Endothelial cell of umbilical vein (primary cell): ENCODE measurements at regions of chr19 and their contacts with region 1.

Region 1: DNA sequence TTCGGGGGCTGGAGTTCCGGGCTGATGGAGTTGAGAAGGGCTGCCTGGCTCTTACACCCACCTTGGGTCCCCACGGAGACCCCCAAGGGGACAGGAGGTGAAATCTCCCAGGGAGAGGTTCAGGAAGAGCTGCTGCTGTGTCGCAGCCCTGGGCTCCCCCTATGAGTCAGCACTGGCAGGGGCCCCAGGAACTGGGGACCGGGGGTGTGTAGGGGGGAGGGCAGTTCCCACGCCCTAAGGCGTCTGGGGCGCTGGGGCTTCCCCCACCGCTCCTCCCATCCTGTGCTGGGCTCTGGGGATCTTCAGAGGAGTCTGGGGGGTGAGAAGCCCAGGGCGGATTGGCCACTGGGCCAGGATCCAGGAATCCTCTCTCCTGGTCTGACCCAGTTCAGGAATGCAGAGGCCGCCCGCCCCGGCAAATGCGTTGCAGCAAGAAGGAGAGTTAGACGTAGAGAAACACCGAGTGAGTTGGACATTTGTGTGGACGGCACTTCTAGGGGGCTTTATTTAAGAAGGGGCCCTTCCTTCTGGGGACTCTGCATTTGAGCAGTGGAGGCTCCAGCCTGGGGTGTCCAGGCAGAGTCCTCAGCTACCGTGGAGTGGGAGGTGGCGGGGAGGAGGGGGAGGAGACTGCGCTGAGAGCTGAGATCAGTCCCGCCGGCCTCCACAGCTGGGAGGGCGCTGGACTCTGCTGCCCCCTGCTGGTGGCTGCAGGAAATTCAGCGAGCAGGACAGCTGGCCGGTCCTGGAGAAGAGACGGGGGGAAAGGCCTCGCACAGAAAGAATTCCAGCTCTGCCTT is 15.0 kb upstream of the NANOS3 start:
- DNase-seq: peak; percentile 93
- H3K4me3 ChIP-seq: peak overlapping the region; percentile 29 to 48 (median 41)
- H3K27ac ChIP-seq: peak overlapping the region; percentile 99
- H3K4me1 ChIP-seq: peaks cover 17% of the 10 kb centered on the region
- H3K27me3 ChIP-seq: no peaks in the 10 kb centered on the region
- CTCF ChIP-seq: peak; percentile 79 to 94
- POLR2A ChIP-seq: no peak

Region 2: DNA sequence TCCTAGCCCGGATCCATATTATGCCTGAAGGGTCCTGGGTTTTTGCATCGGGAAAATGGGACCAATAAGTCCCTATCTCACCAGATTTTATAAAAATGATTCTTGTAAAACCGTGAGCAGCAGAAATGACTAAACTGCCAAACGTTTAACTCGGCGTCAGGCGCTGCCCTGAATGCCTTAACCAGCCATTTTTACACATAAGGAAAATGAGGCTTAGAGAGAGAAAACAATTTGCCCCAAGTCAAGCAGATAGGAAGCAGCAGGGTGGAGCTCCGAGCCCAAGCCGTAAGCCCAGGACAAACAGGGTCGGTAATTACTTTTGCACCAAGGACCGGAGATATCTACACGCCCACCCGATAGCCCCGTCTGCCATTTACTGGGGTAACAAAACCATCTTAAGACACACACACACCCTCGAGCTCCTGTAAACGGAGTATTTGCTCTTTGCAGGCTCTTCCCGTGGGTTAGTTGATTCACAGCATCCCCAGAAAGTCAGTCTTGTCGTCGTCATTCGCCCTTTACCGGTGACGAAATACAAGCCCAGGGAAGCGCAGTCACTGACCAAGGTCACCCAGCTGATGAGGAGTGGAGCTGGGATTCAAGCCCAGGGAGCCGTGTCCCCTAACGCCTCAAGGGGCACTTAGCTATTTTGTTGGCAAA is 113.6 kb before region 1 on chr19:
- CTCF ChIA-PET with region 1: interaction called, 10 read pairs
- POLR2A ChIA-PET with region 1: interaction called, 3 read pairs
- dilution Hi-C with region 1: no loop called
- intact Hi-C with region 1: no loop called
- DNase-seq: peak; percentile 42
- H3K4me3 ChIP-seq: peak overlapping the region; percentile 85 to 93 (median 85)
- H3K27ac ChIP-seq: peak overlapping the region; percentile 82
- H3K4me1 ChIP-seq: peaks cover 13% of the 10 kb centered on the region
- H3K27me3 ChIP-seq: no peaks in the 10 kb centered on the region
- CTCF ChIP-seq: no peak
- POLR2A ChIP-seq: peak; percentile 61

Region 3: DNA sequence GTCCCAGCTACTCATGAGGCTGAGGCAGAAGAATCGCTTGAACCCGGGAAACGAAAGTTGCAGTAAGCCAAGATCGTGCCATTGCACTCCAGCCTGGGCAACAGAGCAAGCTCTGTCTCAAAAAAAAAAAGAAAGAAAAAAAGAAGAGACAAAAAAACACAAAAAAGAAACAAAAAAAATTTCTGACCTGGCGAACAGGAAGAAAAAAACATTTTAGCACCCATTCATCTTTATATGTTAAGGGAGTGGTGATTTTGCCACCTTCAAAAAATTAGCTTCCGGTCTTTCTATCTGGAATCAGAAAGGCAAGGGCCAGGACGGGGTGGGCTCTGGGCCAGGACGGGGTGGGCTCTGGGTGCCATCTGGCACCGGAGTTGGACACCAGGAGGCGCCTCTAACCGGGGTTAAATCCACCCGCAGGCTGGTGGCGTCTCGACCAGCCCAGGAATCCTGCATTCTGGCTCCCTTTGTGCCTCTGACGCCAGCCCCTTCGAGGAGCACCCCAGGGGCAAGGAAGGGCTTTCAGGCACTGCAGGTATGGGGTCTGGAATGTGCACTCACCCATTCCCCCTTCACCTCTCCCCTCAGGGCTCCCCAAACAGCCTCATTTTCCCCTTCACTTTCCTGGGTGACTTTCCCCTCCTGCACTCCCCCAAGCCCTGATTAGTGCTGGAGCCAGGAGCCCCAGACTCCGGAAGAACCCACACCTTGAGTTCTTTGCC is 77.0 kb before region 1 on chr19:
- CTCF ChIA-PET with region 1: interaction called, 62 read pairs
- POLR2A ChIA-PET with region 1: interaction called, 5 read pairs
- dilution Hi-C with region 1: no loop called
- intact Hi-C with region 1: loop called (anchors 1 kb)
- DNase-seq: peak; percentile 62
- H3K4me3 ChIP-seq: no peak overlapping the region
- H3K27ac ChIP-seq: no peak overlapping the region
- H3K4me1 ChIP-seq: peaks cover 27% of the 10 kb centered on the region
- H3K27me3 ChIP-seq: no peaks in the 10 kb centered on the region
- CTCF ChIP-seq: peak; percentile 67 to 85
- POLR2A ChIP-seq: no peak

Region 4: GRCh38 chr19:13819238-13819637 is 42.7 kb before region 1 on chr19:
- CTCF ChIA-PET with region 1: interaction called, 13 read pairs
- POLR2A ChIA-PET with region 1: interaction called, 7 read pairs
- dilution Hi-C with region 1: no loop called
- intact Hi-C with region 1: no loop called
- DNase-seq: no peak
- H3K4me3 ChIP-seq: no peak overlapping the region
- H3K27ac ChIP-seq: no peak overlapping the region
- H3K4me1 ChIP-seq: no peaks in the 10 kb centered on the region
- H3K27me3 ChIP-seq: no peaks in the 10 kb centered on the region
- CTCF ChIP-seq: no peak
- POLR2A ChIP-seq: no peak

Region 5: GRCh38 chr19:13833330-13834243 is 28.3 kb before region 1 on chr19:
- CTCF ChIA-PET with region 1: interaction called, 77 read pairs
- POLR2A ChIA-PET with region 1: interaction called, 16 read pairs
- dilution Hi-C with region 1: no loop called
- intact Hi-C with region 1: no loop called
- DNase-seq: peak; percentile 91
- H3K4me3 ChIP-seq: no peak overlapping the region
- H3K27ac ChIP-seq: peak overlapping the region; percentile 11
- H3K4me1 ChIP-seq: peaks cover 27% of the 10 kb centered on the region
- H3K27me3 ChIP-seq: no peaks in the 10 kb centered on the region
- CTCF ChIP-seq: peak; percentile 32 to 63
- POLR2A ChIP-seq: peak; percentile 93

Region 6: DNA sequence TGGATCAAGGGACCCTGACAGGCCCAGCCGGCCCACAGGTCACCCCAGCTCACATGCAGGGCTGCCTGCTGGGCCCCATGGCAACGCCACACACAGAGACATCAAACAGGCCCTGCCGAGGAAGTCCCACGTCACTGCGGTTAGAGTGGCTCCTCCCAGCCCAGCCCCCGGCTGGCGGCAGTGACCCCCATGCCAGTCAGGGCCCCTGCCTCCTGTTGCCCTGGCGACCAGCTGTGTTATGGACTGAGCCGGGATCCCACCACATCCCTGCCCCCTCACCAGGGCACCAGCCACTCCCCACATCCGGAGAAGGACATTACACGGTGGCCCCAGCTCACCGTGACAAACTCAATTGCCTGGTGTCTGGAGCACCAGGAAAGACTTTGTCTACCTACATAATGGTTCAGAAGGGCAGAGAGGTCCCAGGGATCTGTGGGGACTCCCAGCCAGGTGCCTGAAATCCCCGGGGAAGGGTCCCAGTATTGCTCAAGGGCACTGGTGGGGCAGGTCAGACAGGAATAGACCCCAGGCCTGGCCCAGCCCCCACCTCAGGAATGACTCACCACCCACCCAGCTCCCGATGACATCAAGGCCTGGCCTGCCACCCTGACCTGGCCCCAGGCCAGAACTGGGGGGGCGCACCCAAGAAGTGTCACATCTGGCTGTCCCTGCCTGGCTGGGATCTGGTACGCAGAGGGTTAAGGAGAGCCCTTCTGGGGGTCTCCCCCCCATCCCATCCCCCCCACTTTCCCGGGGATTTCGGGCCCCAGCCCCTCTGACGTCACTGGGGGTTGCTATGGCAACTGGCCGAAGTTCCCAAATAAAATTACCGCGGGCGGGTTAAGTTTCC is 15.2 kb before region 1 on chr19:
- CTCF ChIA-PET with region 1: interaction called, 58 read pairs
- POLR2A ChIA-PET with region 1: interaction called, 25 read pairs
- dilution Hi-C with region 1: no loop called
- intact Hi-C with region 1: loop called (anchors 1 kb)
- DNase-seq: peak; percentile 88
- H3K4me3 ChIP-seq: peak overlapping the region in 1 of 3 experiments; percentile 48
- H3K27ac ChIP-seq: peak overlapping the region; percentile 99
- H3K4me1 ChIP-seq: peaks cover 43% of the 10 kb centered on the region
- H3K27me3 ChIP-seq: no peaks in the 10 kb centered on the region
- CTCF ChIP-seq: no peak
- POLR2A ChIP-seq: no peak